ENCODE measurements at regions of chr7 and their contacts with region 1.

Region 1: GRCh38 chr7:143214789-143215679 is 6.8 kb upstream of the TAS2R40 start:
- H3K4me3 ChIP-seq: no peak overlapping the region
- H3K27ac ChIP-seq: no peak overlapping the region
- H3K4me1 ChIP-seq: no peaks in the 10 kb centered on the region
- CTCF ChIP-seq: peak; percentile 87

Region 2: GRCh38 chr7:142804728-142805207 is 410.3 kb before region 1 on chr7:
- CTCF ChIA-PET with region 1: no interaction called
- POLR2A ChIA-PET with region 1: no interaction called
- H3K4me3 ChIP-seq: no peak overlapping the region
- H3K27ac ChIP-seq: no peak overlapping the region
- H3K4me1 ChIP-seq: no peaks in the 10 kb centered on the region
- CTCF ChIP-seq: no peak

Region 3: GRCh38 chr7:142853739-142854371 is 361.2 kb before region 1 on chr7:
- CTCF ChIA-PET with region 1: interaction called, 16 read pairs
- POLR2A ChIA-PET with region 1: no interaction called
- H3K4me3 ChIP-seq: peak overlapping the region; percentile 51
- H3K27ac ChIP-seq: no peak overlapping the region; the same call in 1 of the 2 replicates
- H3K4me1 ChIP-seq: no peaks in the 10 kb centered on the region
- CTCF ChIP-seq: peak; percentile 67

Region 4: DNA sequence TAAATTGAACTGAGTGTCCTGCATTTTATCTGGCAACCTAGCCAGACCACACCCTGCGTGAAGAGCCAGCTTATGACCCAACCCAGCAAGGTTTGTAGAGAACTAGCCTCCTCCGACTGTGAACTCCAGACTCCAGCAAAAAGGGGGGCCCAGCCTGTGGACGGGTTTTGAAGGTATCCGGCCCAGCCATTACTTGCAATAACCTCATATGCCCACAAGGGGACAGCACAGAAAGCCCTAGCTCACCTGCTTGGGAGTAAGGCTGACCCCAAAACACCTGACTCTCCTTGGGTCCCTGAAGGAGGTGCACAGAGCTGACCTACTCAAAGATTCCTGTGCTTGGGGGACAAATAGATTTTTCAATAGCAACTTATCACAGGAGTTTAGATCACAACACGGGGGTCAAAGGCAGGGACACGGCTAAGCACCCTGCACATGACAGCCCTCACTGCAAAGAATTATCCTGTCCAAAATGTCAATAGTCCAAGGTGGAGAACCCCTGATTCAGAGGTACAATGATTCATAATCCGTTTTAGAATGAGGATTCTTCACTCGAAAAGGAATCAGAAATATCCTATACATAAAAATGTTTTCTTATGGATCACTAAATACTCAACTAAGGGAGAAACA is 334.0 kb before region 1 on chr7:
- CTCF ChIA-PET with region 1: interaction called, 57 read pairs
- POLR2A ChIA-PET with region 1: no interaction called
- H3K4me3 ChIP-seq: no peak overlapping the region
- H3K27ac ChIP-seq: no peak overlapping the region
- H3K4me1 ChIP-seq: no peaks in the 10 kb centered on the region
- CTCF ChIP-seq: peak; percentile 10; the same call in 1 of the 2 replicates

Region 5: GRCh38 chr7:143008007-143008901 is 206.8 kb before region 1 on chr7:
- CTCF ChIA-PET with region 1: interaction called, 148 read pairs
- POLR2A ChIA-PET with region 1: no interaction called
- H3K4me3 ChIP-seq: no peak overlapping the region
- H3K27ac ChIP-seq: no peak overlapping the region
- H3K4me1 ChIP-seq: no peaks in the 10 kb centered on the region
- CTCF ChIP-seq: no peak

Region 6: DNA sequence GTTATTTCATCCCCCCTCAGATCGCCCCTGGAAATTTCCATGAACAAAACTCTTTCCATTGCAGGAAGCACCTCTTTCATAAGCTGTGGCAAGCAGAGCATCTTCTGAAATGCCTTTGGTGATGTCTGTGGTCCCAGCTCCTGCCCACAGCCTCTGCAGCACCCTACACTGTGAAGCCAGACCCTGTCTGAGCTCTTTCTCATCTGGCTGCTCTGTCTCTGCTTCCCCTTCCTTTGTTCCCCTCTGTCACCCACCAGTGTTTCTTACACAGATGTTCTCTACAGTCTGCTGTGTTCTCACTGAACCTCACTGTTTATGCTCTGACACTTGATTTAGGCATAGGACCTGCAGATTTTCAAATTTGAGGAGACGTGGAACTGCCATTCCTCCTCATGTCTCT is 33.7 kb before region 1 on chr7:
- CTCF ChIA-PET with region 1: no interaction called
- POLR2A ChIA-PET with region 1: no interaction called
- H3K4me3 ChIP-seq: no peak overlapping the region
- H3K27ac ChIP-seq: no peak overlapping the region
- H3K4me1 ChIP-seq: no peaks in the 10 kb centered on the region
- CTCF ChIP-seq: no peak

Region 7: DNA sequence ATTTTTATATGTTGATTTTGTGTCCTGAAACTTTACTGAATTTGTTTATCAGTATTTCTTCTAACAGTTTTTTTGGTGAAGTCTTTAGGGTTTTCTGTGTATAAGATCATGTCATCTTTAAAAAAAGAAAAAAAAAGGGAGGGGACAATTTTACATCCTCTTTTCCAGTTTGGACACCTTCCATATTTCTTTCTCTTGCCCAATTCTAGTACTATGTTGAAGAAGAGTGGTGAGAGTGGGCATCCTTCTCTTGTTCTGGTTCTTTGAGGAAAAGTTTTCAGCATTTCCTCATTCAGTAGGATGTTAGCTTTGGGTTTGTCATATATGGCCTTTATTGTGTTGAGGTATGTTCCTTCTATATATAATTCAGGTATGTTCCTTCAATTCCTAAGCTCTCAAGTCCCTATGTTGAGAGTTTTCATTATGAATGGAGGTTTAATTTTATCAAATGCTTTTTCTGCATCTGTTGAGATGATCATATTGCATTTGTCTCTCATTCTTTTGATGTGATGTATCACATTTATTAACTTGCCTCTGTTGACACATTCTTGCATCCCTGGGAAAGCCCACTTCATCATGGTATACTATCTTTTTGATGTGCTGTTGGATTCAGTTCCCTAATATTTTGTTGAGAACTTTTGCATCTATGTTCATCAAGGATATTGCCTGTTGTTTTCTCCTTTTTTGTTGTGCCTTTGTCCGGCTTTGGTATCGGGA is 18.9 kb after region 1 on chr7:
- CTCF ChIA-PET with region 1: interaction called, 16 read pairs
- POLR2A ChIA-PET with region 1: no interaction called
- H3K4me3 ChIP-seq: no peak overlapping the region
- H3K27ac ChIP-seq: no peak overlapping the region
- H3K4me1 ChIP-seq: no peaks in the 10 kb centered on the region
- CTCF ChIP-seq: no peak

Region 8: DNA sequence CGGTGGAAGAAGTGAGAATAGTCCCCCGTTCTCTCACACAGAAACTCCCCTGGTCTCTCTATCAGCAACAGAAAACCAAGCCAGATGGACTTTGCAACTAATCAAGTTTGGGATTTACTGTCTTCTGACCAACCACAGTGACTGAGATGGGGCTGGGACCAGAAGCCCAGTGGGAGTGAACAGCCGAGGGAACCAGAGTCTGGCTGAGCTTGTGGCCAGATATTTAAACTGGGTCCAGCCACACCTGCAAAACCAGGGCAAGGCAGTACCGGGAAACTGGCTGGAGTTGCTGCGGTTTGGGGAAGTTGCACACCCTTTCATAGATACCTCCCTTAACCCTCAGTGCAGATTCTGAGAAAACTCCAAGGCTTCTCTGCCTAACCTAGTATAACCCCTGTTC is 54.2 kb after region 1 on chr7:
- CTCF ChIA-PET with region 1: no interaction called
- POLR2A ChIA-PET with region 1: no interaction called
- H3K4me3 ChIP-seq: no peak overlapping the region
- H3K27ac ChIP-seq: no peak overlapping the region
- H3K4me1 ChIP-seq: no peaks in the 10 kb centered on the region
- CTCF ChIP-seq: no peak

Measured in HEK293 (cell line).